Activated CD8-positive, alpha-beta memory T cell treated with anti-CD3 and anti-CD28 coated beads, Interleukin-2, amount 10 ng/mL, durations not matched to agents 7 days and 5 days (primary cell): ENCODE measurements at regions of chr16 and their contacts with region 1.

Region 1: GRCh38 chr16:3690470-3690928 is 26.8 kb downstream of the TRAP1 start:
- DNase-seq: peak; percentile 90
- ATAC-seq: peak; percentile 98
- H3K4me3 Mint-ChIP-seq: no peak overlapping the region
- H3K27ac Mint-ChIP-seq: peak overlapping the region; percentile 63
- H3K4me1 Mint-ChIP-seq: peaks cover 8% of the 10 kb centered on the region
- H3K27me3 Mint-ChIP-seq: no peaks in the 10 kb centered on the region

Region 2: DNA sequence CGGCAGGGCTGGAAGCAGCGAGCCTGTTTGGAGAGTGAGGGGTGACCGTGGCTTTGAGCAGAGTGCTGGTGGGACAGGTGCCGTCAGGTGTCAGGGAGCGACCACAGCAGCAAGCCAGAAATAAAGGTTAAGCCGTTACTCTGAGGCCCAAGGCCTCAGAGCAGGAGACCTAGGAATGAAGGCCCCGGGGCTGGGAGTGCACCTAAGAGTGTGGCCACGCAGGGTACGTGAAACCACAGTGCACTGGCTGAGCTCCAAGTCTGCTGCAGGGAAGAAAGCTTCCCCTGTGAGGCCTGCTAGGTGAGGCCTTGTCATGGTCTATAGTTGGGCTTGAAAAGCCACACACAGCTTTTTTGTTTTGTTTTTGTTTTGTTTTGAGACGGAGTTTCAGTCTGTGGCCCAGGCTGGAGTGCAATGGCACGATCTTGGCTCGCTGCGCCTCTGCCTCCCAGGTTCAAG is 181.0 kb before region 1 on chr16:
- CTCF ChIA-PET with region 1: no interaction called
- DNase-seq: peak; percentile 93
- ATAC-seq: peak; percentile 96
- H3K4me3 Mint-ChIP-seq: peak overlapping the region; percentile 25
- H3K27ac Mint-ChIP-seq: peak overlapping the region; percentile 92
- H3K4me1 Mint-ChIP-seq: peaks cover 70% of the 10 kb centered on the region
- H3K27me3 Mint-ChIP-seq: no peaks in the 10 kb centered on the region

Region 3: GRCh38 chr16:3879887-3880564 is 189.5 kb after region 1 on chr16:
- CTCF ChIA-PET with region 1: interaction called, 13 read pairs
- DNase-seq: peak; percentile 76
- ATAC-seq: peak; percentile 65
- H3K4me3 Mint-ChIP-seq: peak overlapping the region; percentile 82
- H3K27ac Mint-ChIP-seq: no peak overlapping the region
- H3K4me1 Mint-ChIP-seq: peaks cover 38% of the 10 kb centered on the region
- H3K27me3 Mint-ChIP-seq: peaks cover 10% of the 10 kb centered on the region